Activated CD8-positive, alpha-beta T cell treated with anti-CD3 and anti-CD28 coated beads for 36 hours (primary cell): ENCODE measurements at regions of chr6 and their contacts with region 1.

Region 1: DNA sequence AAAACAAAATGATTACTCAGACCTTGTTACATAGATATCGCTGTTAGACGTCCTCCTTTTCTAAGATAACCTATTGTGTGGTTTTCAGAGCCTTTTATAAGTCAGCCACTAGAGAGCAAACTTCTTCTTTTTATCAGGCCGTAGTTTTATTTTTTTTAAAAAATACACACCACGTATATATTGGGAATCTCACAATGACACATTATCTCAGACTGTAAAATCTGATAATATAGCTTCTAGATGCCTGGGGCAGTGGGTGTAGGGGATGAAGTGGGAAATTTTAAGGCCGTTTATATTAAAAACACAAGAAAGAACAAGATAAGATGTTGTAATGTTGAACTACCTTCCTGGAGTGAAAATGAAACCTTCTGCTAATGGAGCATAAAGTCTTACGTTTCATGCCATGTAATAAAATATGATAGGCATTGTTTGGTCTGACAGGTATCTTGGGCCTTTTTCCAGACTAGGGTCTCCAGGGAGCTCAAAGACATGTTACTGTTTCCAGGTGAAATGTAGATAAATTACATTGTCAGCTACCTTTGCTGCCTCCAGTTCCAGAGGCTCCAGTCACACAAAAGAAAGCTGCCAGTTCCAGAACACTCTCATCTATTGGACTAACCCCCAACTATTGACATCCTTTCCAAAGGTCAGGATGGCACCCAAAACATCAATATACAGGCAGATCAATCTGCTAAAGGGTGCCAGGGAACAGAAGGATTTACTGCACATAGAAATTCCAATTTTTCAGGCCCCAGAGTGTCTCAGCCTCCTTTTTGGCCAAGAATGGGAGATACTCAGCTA is 130.2 kb upstream of the AKIRIN2 start:
- DNase-seq: no peak
- ATAC-seq: peak; percentile 79
- H3K4me3 Mint-ChIP-seq: peak overlapping the region; percentile 75
- H3K27ac Mint-ChIP-seq: peak overlapping the region; percentile 71
- H3K4me1 Mint-ChIP-seq: peaks cover 11% of the 10 kb centered on the region
- H3K27me3 Mint-ChIP-seq: peaks cover 3% of the 10 kb centered on the region
- CTCF ChIP-seq: peak; percentile 35

Region 2: DNA sequence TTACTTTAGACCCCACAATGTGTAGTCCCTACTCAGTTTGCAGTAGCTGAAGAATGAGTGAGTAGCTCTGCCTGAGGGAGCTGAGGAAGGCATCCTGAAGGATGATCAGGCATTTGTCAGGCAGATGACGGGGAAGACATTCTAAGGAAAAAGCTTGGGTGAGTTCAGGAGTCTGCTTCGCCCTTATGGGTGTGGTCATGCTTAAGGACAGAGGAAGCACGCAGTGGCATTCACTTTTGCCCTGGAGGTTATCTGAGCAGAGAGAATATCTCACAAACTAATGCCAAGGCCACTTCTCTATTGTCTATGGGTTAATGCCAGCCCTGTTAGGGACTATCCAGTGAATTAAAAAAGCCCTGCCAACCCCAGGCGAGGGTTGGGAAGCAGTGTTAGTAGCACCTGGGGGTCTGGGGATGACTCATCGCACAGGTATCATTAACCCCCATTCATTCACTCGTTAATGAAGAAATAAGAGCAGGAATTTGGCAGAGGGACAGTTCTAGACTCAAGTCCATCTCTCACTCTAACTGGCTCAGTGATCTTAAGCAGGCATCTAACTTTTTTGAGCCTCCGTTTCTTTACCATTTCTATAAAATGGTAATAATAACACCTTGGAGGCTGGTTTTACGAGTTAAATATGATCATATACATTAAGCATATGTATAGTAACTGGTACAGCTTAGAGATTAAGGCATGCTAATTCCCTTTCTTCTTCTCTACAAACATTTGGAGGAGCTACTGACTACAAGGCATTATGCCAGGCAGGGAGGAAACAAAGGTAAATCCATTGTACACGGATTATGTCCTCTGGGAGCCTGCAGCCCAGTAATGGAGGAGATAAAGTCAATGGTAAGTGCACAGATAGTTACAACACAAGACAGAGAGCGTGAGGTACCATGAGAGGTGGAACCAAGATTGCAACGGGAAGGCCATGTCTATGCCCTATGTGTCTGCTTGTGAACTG is 37.0 kb before region 1 on chr6:
- CTCF ChIA-PET with region 1: no interaction called
- POLR2A ChIA-PET with region 1: no interaction called
- intact Hi-C with region 1: no loop called
- DNase-seq: no peak
- ATAC-seq: no peak
- H3K4me3 Mint-ChIP-seq: no peak overlapping the region
- H3K27ac Mint-ChIP-seq: no peak overlapping the region
- H3K4me1 Mint-ChIP-seq: no peaks in the 10 kb centered on the region
- H3K27me3 Mint-ChIP-seq: peaks cover 3% of the 10 kb centered on the region
- CTCF ChIP-seq: no peak

Region 3: GRCh38 chr6:87848574-87848973 is 16.3 kb after region 1 on chr6:
- CTCF ChIA-PET with region 1: interaction called, 11 read pairs
- POLR2A ChIA-PET with region 1: no interaction called
- intact Hi-C with region 1: no loop called
- DNase-seq: no peak
- ATAC-seq: no peak
- H3K4me3 Mint-ChIP-seq: no peak overlapping the region
- H3K27ac Mint-ChIP-seq: no peak overlapping the region
- H3K4me1 Mint-ChIP-seq: no peaks in the 10 kb centered on the region
- H3K27me3 Mint-ChIP-seq: peaks cover 2% of the 10 kb centered on the region
- CTCF ChIP-seq: no peak

Region 4: GRCh38 chr6:88238065-88238464 is 405.8 kb after region 1 on chr6:
- CTCF ChIA-PET with region 1: interaction called, 4 read pairs
- POLR2A ChIA-PET with region 1: no interaction called
- intact Hi-C with region 1: loop called (anchors 10 kb)
- DNase-seq: peak; percentile 4
- ATAC-seq: no peak
- H3K4me3 Mint-ChIP-seq: no peak overlapping the region
- H3K27ac Mint-ChIP-seq: no peak overlapping the region
- H3K4me1 Mint-ChIP-seq: no peaks in the 10 kb centered on the region
- H3K27me3 Mint-ChIP-seq: no peaks in the 10 kb centered on the region
- CTCF ChIP-seq: peak; percentile 15